ENCODE measurements at regions of chr22 and their contacts with region 1.

Region 1: GRCh38 chr22:35627264-35628041 is 10.3 kb upstream of the MB start:
- DNase-seq: peak; percentile 78 to 93 (median 88)
- ATAC-seq: peak; percentile 82 to 86
- H3K4me3 ChIP-seq: peak overlapping the region; percentile 49
- H3K27ac ChIP-seq: peak overlapping the region; percentile 55
- H3K4me1 ChIP-seq: peaks cover 6% of the 10 kb centered on the region
- H3K27me3 ChIP-seq: no peaks in the 10 kb centered on the region

Region 2: GRCh38 chr22:35430897-35431322 is 196.5 kb before region 1 on chr22:
- intact Hi-C with region 1: loop called in 1 of 4 experiments (anchors 10 kb)
- DNase-seq: peak; percentile 90 to 96 (median 95)
- ATAC-seq: peak; percentile 96 to 98
- H3K4me3 ChIP-seq: no peak overlapping the region
- H3K27ac ChIP-seq: no peak overlapping the region
- H3K4me1 ChIP-seq: no peaks in the 10 kb centered on the region
- H3K27me3 ChIP-seq: no peaks in the 10 kb centered on the region

Region 3: DNA sequence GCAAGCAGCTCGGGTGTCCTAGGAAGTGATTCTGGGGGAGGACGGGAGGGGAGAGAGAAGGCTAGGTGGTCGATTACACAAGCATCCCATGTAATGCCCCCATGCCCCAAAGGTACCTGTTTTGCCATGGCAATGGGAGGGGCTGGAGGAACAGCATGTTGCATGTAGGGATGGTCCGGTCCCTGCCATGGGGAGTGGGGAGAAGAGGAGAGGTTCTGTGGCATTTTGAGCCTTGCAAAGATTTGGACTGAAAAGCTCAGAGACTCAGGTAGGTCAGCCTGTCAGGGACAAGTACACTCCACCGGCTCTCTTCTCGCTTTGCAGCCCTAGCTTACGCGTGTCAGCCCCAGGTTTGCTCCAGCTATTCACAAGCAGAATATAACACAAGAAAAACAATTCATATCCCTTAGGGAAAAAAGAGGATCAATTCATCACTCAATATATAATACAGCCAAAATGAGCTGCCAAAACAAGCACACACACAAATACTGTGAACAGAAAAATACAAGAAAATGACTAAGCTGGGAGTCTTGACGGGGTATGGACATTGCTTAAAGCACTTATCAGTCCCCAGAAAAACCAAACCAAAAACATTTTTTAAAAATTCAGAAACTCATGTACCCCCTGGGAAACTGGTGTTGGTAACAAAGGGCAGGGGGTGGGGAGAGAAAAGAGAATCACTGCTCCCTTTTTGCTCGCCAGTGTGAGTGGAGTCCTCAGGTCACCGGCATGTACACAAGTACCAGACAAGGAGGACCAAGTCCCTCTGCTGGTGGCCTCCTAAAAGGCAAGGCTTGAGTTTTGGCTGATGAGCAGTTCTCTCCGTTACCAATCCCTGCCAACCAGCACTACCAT is 111.8 kb after region 1 on chr22:
- intact Hi-C with region 1: loop called in 2 of 4 experiments (anchors 5 to 10 kb)
- DNase-seq: peak in 1 of 3 donors; percentile 61
- ATAC-seq: peak; percentile 36 to 57
- H3K4me3 ChIP-seq: no peak overlapping the region
- H3K27ac ChIP-seq: no peak overlapping the region
- H3K4me1 ChIP-seq: peaks cover 16% of the 10 kb centered on the region
- H3K27me3 ChIP-seq: no peaks in the 10 kb centered on the region

Region 4: GRCh38 chr22:35914665-35915476 is 287.4 kb after region 1 on chr22:
- intact Hi-C with region 1: loop called in 3 of 4 experiments (anchors 5 to 10 kb)
- DNase-seq: peak; percentile 36 to 61 (median 57)
- ATAC-seq: peak; percentile 91 to 94
- H3K4me3 ChIP-seq: peak overlapping the region; percentile 52
- H3K27ac ChIP-seq: peak overlapping the region; percentile 98
- H3K4me1 ChIP-seq: peaks cover 7% of the 10 kb centered on the region
- H3K27me3 ChIP-seq: no peaks in the 10 kb centered on the region

Region 5: DNA sequence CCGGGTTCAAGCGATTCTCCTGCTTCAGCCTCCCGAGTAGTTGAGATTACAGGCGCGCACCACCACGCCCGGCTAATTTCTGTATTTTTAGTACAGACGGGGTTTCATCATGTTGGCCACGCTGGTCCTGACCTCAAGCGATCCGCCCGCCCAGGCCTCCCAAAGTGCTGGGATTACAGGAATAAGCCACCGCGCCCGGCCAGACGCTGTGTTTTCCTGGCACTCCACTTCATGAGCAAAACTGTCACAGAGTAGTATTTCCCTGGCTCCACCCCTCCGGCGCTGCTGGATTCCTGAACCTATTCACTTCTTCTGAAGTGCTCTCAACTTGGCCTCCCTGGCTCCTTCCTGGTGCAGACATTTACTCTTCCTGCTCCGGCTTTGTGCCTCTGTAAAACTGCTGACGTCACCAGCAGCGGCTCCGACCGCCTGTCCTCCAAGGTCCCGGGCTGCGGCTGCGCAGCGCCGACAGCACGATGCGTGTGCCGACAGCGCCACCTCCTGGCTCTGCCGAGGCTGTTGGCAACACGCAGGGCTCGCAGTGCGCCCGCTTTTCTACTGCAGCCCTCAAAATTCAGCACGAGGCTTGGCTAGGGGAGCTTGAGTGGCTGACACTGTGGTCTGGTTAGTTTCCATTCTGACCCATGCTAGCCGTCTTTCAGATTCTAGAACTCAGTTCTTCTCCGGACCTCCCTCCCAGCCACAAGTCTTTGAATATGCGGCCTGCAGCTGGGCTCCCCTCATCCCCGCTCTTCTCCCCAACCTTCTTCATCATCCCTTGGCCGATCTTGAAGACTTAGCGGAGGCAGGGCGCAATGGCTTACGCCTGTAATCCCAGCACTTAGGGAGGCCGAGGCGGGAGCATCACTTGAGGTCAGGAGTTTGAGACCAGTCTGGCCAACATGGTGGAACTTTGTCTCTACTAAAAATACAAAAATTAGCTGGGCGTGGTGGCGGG is 496.5 kb after region 1 on chr22:
- intact Hi-C with region 1: loop called in 3 of 4 experiments (anchors 5 to 10 kb)
- DNase-seq: peak; percentile 97 to 98 (median 97)
- ATAC-seq: peak; percentile 98
- H3K4me3 ChIP-seq: no peak overlapping the region
- H3K27ac ChIP-seq: peak overlapping the region; percentile 89
- H3K4me1 ChIP-seq: no peaks in the 10 kb centered on the region
- H3K27me3 ChIP-seq: no peaks in the 10 kb centered on the region

Region 6: GRCh38 chr22:36435516-36436415 is 808.3 kb after region 1 on chr22:
- intact Hi-C with region 1: no loop called
- DNase-seq: peak in 1 of 3 donors; percentile 31
- ATAC-seq: peak; percentile 8 to 26
- H3K4me3 ChIP-seq: no peak overlapping the region
- H3K27ac ChIP-seq: no peak overlapping the region
- H3K4me1 ChIP-seq: no peaks in the 10 kb centered on the region
- H3K27me3 ChIP-seq: no peaks in the 10 kb centered on the region